ENCODE measurements at regions of chr2 and their contacts with region 1.

Region 1: DNA sequence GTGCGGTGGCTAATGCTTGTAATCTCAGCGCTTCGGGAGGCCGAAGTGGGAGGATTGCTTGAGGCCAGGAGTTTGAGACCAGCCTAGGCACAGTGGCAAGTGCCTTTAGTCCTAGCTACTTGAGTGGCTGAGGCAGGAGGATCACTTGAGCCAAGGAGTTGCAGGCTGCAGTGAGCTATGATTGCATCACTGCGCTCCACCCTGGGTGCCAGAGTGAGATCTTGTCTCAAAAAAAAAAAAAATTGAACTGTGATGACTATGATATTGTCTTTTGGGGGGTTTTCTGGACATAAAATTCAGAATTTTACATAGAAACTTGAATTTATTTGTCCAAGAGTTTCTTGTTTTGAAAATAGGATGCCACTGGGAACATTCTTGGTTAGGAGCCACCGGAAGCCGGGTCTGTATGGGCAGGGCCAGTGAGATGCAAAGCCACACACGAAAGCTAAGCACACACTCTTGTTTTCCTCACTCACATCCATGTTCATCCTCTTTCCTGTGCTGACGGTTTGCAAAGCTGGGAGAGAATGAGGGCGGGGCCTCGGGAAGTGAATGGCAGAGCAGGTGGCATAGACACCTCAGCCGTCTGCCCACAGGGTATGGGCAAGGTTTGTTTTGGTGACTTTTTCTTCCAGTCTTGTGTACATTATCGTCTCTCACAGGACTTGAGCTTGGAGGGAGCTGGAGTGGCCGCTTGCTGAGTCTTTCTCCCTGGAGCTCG is 12.6 kb downstream of the AGAP1 start:
- DNase-seq: peak; percentile 75
- ATAC-seq: peak; percentile 62
- H3K4me3 ChIP-seq: peak overlapping the region; percentile 55
- H3K27ac ChIP-seq: peak overlapping the region; percentile 79
- H3K4me1 ChIP-seq: peaks cover 45% of the 10 kb centered on the region
- H3K27me3 ChIP-seq: no peaks in the 10 kb centered on the region
- CTCF ChIP-seq: no peak

Region 2: GRCh38 chr2:235127931-235128330 is 378.5 kb before region 1 on chr2:
- CTCF ChIA-PET with region 1: no interaction called
- POLR2A ChIA-PET with region 1: interaction called, 26 read pairs
- intact Hi-C with region 1: no loop called
- DNase-seq: no peak
- ATAC-seq: no peak
- H3K4me3 ChIP-seq: no peak overlapping the region
- H3K27ac ChIP-seq: no peak overlapping the region
- H3K4me1 ChIP-seq: no peaks in the 10 kb centered on the region
- H3K27me3 ChIP-seq: peaks cover 17% of the 10 kb centered on the region; the same call in 1 of the 2 replicates
- CTCF ChIP-seq: no peak

Region 3: DNA sequence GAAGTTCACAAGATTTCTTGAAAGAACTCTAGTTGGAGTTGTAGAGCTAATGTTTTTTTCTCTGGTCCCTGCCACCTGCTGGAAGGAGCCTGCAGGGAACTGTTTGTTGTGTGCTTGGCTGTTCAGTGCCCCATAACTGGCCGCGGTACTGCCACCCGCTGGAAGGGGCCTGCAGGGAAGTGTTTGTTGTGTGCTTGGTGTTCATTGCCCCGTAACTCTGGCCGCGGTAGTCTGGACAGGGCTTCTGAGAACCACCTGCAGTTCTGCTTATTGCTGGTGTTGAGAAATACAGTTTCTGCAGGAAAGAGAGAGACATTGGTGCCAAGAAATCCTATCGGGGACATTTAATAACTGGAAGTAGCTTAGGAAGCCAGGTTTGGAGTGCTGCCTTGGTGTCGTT is 45.5 kb after region 1 on chr2:
- CTCF ChIA-PET with region 1: interaction called, 8 read pairs
- POLR2A ChIA-PET with region 1: no interaction called
- intact Hi-C with region 1: loop called (anchors 2 kb)
- DNase-seq: peak; percentile 71
- ATAC-seq: peak; percentile 98
- H3K4me3 ChIP-seq: no peak overlapping the region
- H3K27ac ChIP-seq: no peak overlapping the region
- H3K4me1 ChIP-seq: peaks cover 8% of the 10 kb centered on the region; the same call in 1 of the 2 replicates
- H3K27me3 ChIP-seq: no peaks in the 10 kb centered on the region
- CTCF ChIP-seq: peak; percentile 83

Region 4: GRCh38 chr2:235685024-235685721 is 178.7 kb after region 1 on chr2:
- CTCF ChIA-PET with region 1: no interaction called
- POLR2A ChIA-PET with region 1: no interaction called
- intact Hi-C with region 1: no loop called
- DNase-seq: no peak
- ATAC-seq: peak; percentile 37; the same call in 1 of the 2 replicates
- H3K4me3 ChIP-seq: no peak overlapping the region
- H3K27ac ChIP-seq: no peak overlapping the region
- H3K4me1 ChIP-seq: no peaks in the 10 kb centered on the region
- H3K27me3 ChIP-seq: no peaks in the 10 kb centered on the region
- CTCF ChIP-seq: no peak